Mammary epithelial cell (primary cell): ENCODE measurements at regions of chr7 and their contacts with region 1.

Region 1: DNA sequence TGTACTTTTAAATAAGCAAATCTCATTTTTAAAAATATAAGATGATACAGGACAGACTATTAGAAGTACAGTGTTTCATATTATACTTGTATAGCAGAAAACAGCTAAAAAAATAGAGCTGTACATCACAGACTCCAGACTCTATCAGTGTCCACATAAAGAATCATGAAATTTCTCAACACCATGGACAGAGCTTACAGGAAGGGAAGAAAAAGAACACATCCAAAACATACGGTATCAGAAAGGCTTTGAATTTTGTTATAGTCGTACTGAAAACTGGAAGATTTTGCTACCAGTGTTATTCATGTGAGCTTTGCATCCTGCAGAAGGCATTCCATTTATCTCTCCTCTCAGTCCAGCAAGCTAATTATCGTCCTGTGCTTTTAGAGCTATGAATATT is 183.2 kb upstream of the PTPRZ1 start:
- DNase-seq: no peak
- H3K4me3 ChIP-seq: no peak overlapping the region
- H3K27ac ChIP-seq: no peak overlapping the region
- H3K4me1 ChIP-seq: no peaks in the 10 kb centered on the region
- H3K27me3 ChIP-seq: no peaks in the 10 kb centered on the region
- CTCF ChIP-seq: no peak

Region 2: GRCh38 chr7:121730869-121731268 is 41.1 kb after region 1 on chr7:
- CTCF ChIA-PET with region 1: interaction called, 11 read pairs
- dilution Hi-C with region 1: no loop called
- in situ Hi-C with region 1: no loop called
- intact Hi-C with region 1: no loop called
- DNase-seq: no peak
- H3K4me3 ChIP-seq: no peak overlapping the region
- H3K27ac ChIP-seq: no peak overlapping the region
- H3K4me1 ChIP-seq: no peaks in the 10 kb centered on the region
- H3K27me3 ChIP-seq: no peaks in the 10 kb centered on the region
- CTCF ChIP-seq: no peak